Activated CD4-positive, alpha-beta T cell treated with anti-CD3 and anti-CD28 coated beads, Interleukin-2, amount 10 ng/mL, durations not matched to agents 24 days and 14 days (primary cell): ENCODE measurements at regions of chr3 and their contacts with region 1.

Region 1: DNA sequence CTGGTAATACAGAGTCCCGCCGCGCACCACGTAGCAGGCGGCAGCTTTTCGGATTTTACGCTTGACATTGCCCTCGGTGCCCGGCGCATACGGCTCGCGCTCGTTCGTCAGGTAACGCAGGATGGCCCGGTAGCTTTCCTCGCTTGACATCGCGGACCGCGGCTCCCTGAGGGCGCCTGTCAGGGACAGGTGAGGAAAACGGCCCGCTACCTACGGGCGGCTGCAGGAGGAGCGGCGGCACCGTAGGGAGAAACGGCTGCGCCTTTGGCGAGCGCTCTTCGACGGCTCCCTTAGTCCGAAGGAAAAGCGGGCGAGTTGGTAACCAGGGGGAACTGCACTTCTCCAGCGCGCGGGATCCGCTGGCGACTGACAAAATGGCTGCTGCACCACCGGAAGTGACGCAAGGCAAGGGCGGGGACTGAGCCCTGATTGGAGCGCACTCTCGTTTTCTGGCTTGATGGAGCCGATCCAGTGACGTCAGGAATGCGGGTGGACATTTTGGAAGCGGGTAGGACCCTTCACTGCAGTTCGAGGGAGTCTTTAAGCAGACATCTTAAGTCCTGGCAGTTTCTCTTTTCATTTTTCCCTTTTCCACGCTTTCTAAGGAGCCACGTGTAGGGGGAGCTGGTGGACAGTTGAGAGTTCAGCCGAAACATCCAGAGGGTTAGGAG is at the start of gene ZBTB11:
- DNase-seq: peak; percentile 100
- H3K4me3 Mint-ChIP-seq: peak within 1 kb of the TSS; percentile 89
- H3K27ac Mint-ChIP-seq: peak within 1 kb of the TSS; percentile 97
- H3K4me1 Mint-ChIP-seq: peaks cover 36% of the 10 kb centered on the region
- H3K27me3 Mint-ChIP-seq: no peaks in the 10 kb centered on the region
- total RNA-seq, gene ZBTB11: 29.0 and 30.2 TPM in 2 replicates

Region 2: DNA sequence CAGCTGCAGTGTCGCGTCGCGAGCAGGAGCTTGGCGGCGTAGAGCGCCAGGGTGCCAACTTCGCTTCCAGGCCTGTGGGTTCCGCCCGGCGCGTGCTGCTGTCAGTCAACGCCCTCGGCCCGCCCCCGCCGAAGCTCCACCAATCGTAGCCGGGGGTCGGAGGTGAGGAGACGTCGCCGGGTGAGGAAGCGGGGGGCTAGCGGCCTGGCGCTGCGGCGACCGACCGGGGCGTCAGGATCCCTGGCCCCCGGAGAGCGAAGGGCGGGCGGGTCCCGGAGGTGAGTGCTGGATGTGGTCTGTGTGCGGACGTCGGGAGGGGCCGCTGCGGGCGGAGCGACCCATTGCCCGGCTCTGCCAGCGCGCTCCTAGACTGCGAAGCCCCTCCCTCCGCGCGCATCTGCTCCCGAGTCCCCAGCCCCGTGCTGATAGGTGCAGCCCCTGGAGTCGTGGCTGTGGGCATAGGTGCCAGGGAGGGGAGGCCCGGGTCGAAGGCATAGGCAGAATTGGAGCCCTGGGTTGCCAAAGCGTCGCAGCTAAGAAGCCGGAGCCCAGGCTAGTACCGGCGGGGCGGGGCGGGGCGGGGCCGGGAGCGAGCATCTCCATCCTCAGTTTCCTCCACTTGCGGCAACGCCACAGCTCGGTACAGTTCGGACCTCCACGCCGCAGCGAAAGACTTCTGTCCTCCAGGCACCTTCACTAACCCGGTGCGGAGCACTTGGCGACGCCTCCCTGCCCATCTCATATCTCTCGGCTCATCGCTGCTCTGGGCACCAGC is 102.3 kb after region 1 on chr3 and contains the start of gene NXPE3:
- intact Hi-C with region 1: loop called (anchors 1 kb)
- DNase-seq: peak; percentile 98
- H3K4me3 Mint-ChIP-seq: peak within 1 kb of the TSS; percentile 97
- H3K27ac Mint-ChIP-seq: peak within 1 kb of the TSS; percentile 94
- H3K4me1 Mint-ChIP-seq: peaks cover 31% of the 10 kb centered on the region
- H3K27me3 Mint-ChIP-seq: no peaks in the 10 kb centered on the region
- total RNA-seq, gene NXPE3: 17.2 and 18.2 TPM in 2 replicates